GM10248 (cell line): ENCODE measurements at regions of chr3 and their contacts with region 1.

Region 1: DNA sequence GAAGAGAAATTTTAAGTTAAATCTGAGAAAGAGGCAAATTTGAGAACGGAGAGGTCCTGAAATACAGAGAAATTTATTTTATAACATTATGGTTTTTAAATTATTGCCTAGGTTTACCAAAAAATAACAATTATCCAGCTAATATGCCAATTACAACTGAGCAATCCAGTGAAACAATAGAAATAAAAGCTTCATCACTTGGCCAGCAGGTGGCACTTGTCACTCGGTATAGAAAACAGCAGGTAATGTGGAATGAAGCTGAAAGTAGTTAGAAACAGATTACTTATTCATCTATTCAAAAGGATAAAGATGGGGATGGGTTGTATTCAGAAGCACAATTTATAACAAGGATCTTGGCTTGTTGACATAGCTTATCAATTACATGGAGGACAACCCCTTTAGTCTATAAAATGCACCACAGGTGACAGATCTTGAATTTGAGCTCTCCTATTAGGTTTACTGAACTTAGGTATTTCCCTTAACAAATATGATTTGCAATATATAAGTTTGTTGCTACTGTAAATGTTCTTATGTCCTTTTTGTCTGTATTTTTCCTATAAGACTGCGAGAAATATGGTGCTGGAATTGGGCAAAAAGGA is 70.1 kb upstream of the GUCA1C start:
- DNase-seq: peak; percentile 29
- CTCF ChIP-seq: peak; percentile 86

Region 2: DNA sequence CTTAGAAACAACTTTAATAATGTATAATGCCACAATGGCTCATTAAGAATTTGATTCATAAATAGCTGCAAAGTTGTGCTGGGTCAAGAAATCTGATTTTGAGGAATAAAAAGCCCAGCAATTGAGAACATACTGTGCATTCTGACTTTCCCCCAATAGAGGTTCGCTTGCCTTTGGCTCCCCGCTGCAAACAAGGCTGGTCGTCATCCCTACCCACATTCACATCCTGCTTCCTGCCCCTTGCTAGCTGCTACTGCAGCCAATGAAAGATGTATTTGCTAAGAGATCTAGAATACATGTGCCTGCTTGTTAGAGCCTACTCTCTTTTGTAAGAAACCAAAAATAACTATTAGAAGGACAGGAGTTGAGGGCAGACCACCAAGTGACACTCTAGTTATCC is 18.3 kb before region 1 on chr3:
- CTCF ChIA-PET with region 1: interaction called, 10 read pairs
- POLR2A ChIA-PET with region 1: no interaction called
- DNase-seq: no peak
- CTCF ChIP-seq: no peak

Region 3: GRCh38 chr3:109071350-109072142 is 47.8 kb after region 1 on chr3:
- CTCF ChIA-PET with region 1: interaction called, 120 read pairs
- POLR2A ChIA-PET with region 1: no interaction called
- DNase-seq: no peak
- CTCF ChIP-seq: no peak

Region 4: GRCh38 chr3:110946810-110947209 is 1923.1 kb after region 1 on chr3:
- CTCF ChIA-PET with region 1: no interaction called
- POLR2A ChIA-PET with region 1: no interaction called
- DNase-seq: no peak
- CTCF ChIP-seq: no peak